ENCODE measurements at regions of chr15 and their contacts with region 1.

Region 1: GRCh38 chr15:24878153-24878552 is 76.6 kb upstream of the SNRPN start:
- DNase-seq: peak in 4 of 5 donors; percentile 28 to 48 (median 34)
- ATAC-seq: peak; percentile 55 to 92 (median 71)
- H3K4me3 ChIP-seq: peak overlapping the region in 10 of 12 donors; percentile 18 to 55 (median 43)
- H3K27ac ChIP-seq: peak overlapping the region in 2 of 12 donors; percentile 35 to 46
- H3K4me1 ChIP-seq: no peaks in the 10 kb centered on the region
- H3K27me3 ChIP-seq: no peaks in the 10 kb centered on the region
- CTCF ChIP-seq: no peak
- POLR2A ChIP-seq: no peak

Region 2: DNA sequence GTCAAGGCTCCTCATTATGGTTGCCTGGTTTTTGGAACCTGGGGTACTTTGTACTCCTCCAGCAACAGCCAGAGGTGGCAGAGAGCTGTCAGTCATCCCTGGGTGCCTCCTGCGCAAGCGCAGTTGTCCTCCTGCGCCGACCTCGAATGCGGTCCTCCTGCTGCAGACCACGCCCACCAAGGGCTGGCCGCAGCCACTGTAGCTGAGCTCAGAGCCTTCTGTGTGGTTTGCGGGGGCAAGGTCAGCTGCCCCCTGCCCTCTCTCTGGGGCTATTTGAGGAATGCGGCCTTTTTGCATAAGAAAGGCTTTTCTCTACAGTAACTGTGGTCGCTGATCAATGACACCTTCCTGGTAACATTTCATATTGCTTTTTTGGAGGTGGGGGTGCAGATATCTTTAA is 54.7 kb before region 1 on chr15:
- intact Hi-C with region 1: loop called in 1 of 10 experiments (anchors 10 kb)
- DNase-seq: peak; percentile 20 to 76 (median 71)
- ATAC-seq: peak; percentile 91 to 96 (median 94)
- H3K4me3 ChIP-seq: peak overlapping the region in 10 of 12 donors; percentile 6 to 54 (median 45)
- H3K27ac ChIP-seq: peak overlapping the region in 1 of 12 donors; percentile 29
- H3K4me1 ChIP-seq: no peaks in the 10 kb centered on the region
- H3K27me3 ChIP-seq: no peaks in the 10 kb centered on the region
- CTCF ChIP-seq: no peak
- POLR2A ChIP-seq: no peak